ENCODE measurements at regions of chr1 and their contacts with region 1.

Region 1: DNA sequence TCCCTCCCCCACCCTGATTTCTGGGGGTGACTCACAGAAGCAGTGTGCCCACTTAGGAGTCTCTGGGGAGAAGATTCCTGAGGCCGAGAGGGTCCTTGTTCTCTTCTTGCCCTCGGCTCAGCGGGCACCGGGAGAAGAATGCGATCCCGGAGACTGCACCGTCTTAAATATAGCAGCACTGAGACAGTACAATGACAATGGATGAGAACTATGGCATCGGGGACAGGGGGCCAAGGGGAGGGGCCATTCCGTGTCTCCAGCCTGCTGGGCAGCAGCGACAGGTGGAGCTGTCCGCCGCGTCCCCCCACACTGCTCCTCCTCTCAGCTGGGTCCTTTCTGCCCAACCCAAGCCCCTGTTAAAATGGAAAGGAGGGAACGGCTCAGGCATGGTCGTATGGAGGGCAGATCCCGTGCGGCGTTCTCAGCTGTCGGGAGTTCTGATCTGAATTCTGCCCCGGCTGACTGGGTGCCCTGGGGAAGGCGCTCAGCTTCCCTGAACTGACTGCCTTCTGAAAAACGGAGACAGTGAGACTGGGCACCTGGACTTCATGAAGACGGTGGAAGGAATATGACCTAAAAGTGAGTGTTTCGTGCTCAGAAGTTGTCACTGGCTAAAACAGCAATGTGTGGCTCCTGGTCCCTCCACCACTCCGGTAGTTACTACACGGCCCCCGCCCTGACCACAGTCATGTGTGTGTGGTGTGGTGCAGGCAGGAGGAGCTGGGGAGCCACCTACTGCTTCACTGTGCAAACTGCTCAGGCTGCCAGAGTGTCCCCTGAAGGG is at the start of gene MYOM3:
- DNase-seq: peak; percentile 70 to 81 (median 76)
- ATAC-seq: peak; percentile 99
- H3K4me3 ChIP-seq: no peak within 1 kb of the TSS
- H3K27ac ChIP-seq: no peak within 1 kb of the TSS
- H3K4me1 ChIP-seq: peaks cover 0 to 20% of the 10 kb centered on the region in 2 experiments; a peak in 3 of 5 replicates
- H3K27me3 ChIP-seq: peaks cover 60 to 91% of the 10 kb centered on the region in 2 experiments
- CTCF ChIP-seq: peak; percentile 82 to 89 (median 84)
- EP300 ChIP-seq: no peak
- POLR2A ChIP-seq: no peak
- RAD21 ChIP-seq: peak; percentile 91 to 96
- polyA plus RNA-seq, gene MYOM3: not detected

Region 2: GRCh38 chr1:23947366-23947765 is 164.8 kb before region 1 on chr1:
- CTCF ChIA-PET with region 1: no interaction called
- POLR2A ChIA-PET with region 1: no interaction called
- in situ Hi-C with region 1: no loop called
- intact Hi-C with region 1: loop called (anchors 5 kb)
- DNase-seq: no peak
- ATAC-seq: no peak
- H3K4me3 ChIP-seq: no peak overlapping the region
- H3K27ac ChIP-seq: no peak overlapping the region
- H3K4me1 ChIP-seq: no peaks in the 10 kb centered on the region
- H3K27me3 ChIP-seq: 0 out of 5 replicates have a peak, but pooled peaks cover 0 to 4% of the 10 kb centered on the region in 2 experiments
- CTCF ChIP-seq: no peak
- EP300 ChIP-seq: no peak
- POLR2A ChIP-seq: no peak
- RAD21 ChIP-seq: no peak

Measured in K562 (cell line).